ENCODE measurements at regions of chr18 and their contacts with region 1.

Region 1: DNA sequence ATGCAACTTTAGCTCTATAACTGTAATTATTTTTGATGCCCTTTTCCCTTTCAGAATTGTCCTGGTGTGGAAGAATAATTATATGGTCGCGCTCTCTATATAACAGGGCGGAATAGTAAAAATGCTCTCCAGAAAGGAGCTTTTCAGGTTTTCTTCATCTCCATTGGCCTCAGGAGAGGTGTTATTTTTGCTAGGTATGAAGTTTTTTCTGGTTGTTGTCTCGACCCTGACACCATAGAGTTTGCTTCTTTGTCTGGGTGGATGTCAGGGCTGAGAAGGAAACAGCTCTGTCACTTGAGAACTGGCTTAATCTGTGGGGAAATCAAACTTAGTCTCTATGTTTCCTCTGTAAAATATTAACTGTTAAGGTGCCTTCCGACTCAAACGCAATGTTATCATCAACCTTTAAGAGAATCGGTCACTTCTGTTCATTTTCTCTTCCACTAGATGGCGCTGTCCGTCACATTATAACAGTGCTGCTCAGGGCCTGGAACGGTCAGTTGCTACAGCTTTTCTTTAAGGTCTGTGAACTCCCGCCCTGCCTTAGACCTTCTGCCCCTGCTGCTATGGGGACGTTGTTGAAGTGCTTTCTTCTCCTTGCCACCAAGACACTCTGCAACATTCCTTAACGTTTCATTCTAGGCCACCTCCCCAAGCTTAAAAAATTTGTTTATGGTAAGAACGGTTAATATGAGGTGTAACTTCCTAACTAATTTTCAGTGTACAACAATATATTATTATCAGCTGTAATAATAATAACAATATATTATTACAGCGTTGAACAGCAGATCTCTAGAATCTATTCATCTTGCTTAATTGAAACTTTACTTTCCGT is 23.8 kb upstream of the SERPINB12 start:
- DNase-seq: peak in 1 of 2 donors; percentile 64
- H3K4me3 ChIP-seq: no peak overlapping the region
- CTCF ChIP-seq: no peak
- POLR2A ChIP-seq: no peak

Region 2: GRCh38 chr18:61825386-61825785 is 1693.0 kb before region 1 on chr18:
- intact Hi-C with region 1: no loop called
- DNase-seq: no peak
- H3K4me3 ChIP-seq: no peak overlapping the region
- CTCF ChIP-seq: no peak
- POLR2A ChIP-seq: no peak

Region 3: DNA sequence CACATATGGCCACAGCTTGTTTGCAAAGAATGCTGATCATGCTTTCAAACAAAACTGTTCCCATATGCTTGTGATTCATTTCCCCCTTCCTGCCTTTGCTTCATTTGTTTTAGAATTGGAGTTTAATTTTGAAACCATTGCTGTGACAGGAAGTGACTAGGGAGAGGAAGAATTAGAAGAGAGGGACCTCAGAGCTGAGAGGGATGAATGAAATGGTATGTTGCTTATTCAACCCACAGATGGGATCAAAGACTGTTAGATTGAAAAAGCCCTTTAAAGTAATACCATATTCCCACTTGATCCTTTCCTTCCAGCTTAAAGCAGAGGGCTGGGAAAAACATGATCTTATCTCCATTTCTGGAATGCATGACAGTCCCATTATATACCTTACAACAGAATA is 1519.4 kb before region 1 on chr18:
- intact Hi-C with region 1: no loop called
- DNase-seq: no peak
- H3K4me3 ChIP-seq: no peak overlapping the region
- CTCF ChIP-seq: no peak
- POLR2A ChIP-seq: no peak

Region 4: DNA sequence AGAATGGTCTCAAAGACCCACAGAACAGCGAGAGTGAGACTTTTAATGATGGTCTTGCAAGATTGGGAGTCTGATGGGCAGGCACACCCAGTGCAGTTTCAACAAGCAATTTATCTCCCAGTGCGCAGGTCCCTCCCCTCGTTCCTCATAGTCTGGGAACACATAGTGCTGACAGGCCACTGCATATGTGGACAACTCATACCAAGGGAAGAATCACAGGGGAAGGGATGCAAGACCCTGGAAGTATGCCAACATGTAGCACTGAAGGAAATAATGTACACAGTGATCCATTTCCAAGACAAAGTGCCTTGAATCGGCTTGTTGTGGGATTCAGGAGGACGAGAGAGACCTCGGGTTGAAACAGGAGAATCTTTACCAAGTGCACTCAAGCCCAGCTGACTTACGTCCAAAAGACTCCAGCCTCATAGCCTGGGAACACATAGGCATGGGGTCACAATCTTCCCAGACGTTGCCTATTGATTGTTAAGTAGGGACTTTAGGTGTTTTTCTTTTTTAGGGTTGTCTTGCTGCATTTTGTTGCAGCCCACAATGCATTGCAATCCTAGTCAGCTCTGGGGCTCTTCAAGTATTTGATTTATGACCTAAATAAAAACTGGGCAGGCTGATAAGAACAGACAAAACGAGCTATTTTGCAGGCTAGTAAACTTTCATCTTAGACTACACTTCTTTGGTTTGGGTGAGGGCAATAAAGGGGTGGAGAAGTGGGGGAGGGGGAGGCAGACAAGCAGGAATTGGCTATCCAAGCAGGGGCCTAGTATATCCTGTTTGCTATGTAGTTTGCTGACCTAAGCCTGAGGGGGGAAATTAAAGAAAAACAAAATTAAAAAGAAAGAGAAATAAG is 66.4 kb before region 1 on chr18:
- intact Hi-C with region 1: no loop called
- DNase-seq: no peak
- H3K4me3 ChIP-seq: no peak overlapping the region
- CTCF ChIP-seq: no peak
- POLR2A ChIP-seq: no peak

Region 5: GRCh38 chr18:63578357-63578958 is 60.1 kb after region 1 on chr18:
- intact Hi-C with region 1: loop called (anchors 5 kb)
- DNase-seq: no peak
- H3K4me3 ChIP-seq: no peak overlapping the region
- CTCF ChIP-seq: peak in 1 of 3 donors; percentile 14
- POLR2A ChIP-seq: no peak

Region 6: GRCh38 chr18:63844254-63844653 is 325.9 kb after region 1 on chr18:
- intact Hi-C with region 1: loop called (anchors 5 kb)
- DNase-seq: no peak
- H3K4me3 ChIP-seq: no peak overlapping the region
- CTCF ChIP-seq: no peak
- POLR2A ChIP-seq: no peak